CD4-positive, alpha-beta memory T cell (primary cell): ENCODE measurements at regions of chr6 and their contacts with region 1.

Region 1: GRCh38 chr6:149082286-149082707 is 235.2 kb upstream of the TAB2 start:
- DNase-seq: peak; percentile 76 to 86 (median 77)
- H3K4me3 ChIP-seq: no peak overlapping the region
- H3K4me3 Mint-ChIP-seq: peak overlapping the region in 4 of 8 donors; percentile 0 to 46 (median 25)
- H3K27ac ChIP-seq: no peak overlapping the region
- H3K27ac Mint-ChIP-seq: peak overlapping the region in 4 of 7 donors; percentile 12 to 85 (median 68)
- H3K4me1 ChIP-seq: peaks cover 40% of the 10 kb centered on the region
- H3K4me1 Mint-ChIP-seq: peaks cover 31 to 50% (median 38%) of the 10 kb centered on the region in 4 donors
- H3K27me3 ChIP-seq: no peaks in the 10 kb centered on the region
- H3K27me3 Mint-ChIP-seq: no peaks in the 10 kb centered on the region

Region 2: GRCh38 chr6:149028767-149029405 is 53.4 kb before region 1 on chr6:
- CTCF ChIA-PET with region 1: interaction called, 22 read pairs
- POLR2A ChIA-PET with region 1: interaction called, 23 read pairs
- intact Hi-C with region 1: loop called (anchors 1 kb)
- DNase-seq: peak; percentile 77 to 80 (median 78)
- H3K4me3 ChIP-seq: no peak overlapping the region
- H3K4me3 Mint-ChIP-seq: peak overlapping the region in 2 of 8 donors; percentile 66 to 69
- H3K27ac ChIP-seq: no peak overlapping the region
- H3K27ac Mint-ChIP-seq: peak overlapping the region in 6 of 7 donors; percentile 10 to 93 (median 78)
- H3K4me1 ChIP-seq: peaks cover 49% of the 10 kb centered on the region
- H3K4me1 Mint-ChIP-seq: peaks cover 33 to 46% (median 42%) of the 10 kb centered on the region in 4 donors
- H3K27me3 ChIP-seq: no peaks in the 10 kb centered on the region
- H3K27me3 Mint-ChIP-seq: no peaks in the 10 kb centered on the region

Region 3: GRCh38 chr6:149043476-149044130 is 38.7 kb before region 1 on chr6:
- CTCF ChIA-PET with region 1: interaction called, 10 read pairs
- POLR2A ChIA-PET with region 1: interaction called, 5 read pairs
- intact Hi-C with region 1: no loop called
- DNase-seq: no peak
- H3K4me3 ChIP-seq: no peak overlapping the region
- H3K4me3 Mint-ChIP-seq: peak overlapping the region in 1 of 8 donors; percentile 22
- H3K27ac ChIP-seq: no peak overlapping the region
- H3K27ac Mint-ChIP-seq: peak overlapping the region in 1 of 7 donors; percentile 64
- H3K4me1 ChIP-seq: peaks cover 40% of the 10 kb centered on the region
- H3K4me1 Mint-ChIP-seq: peaks cover 34 to 47% (median 41%) of the 10 kb centered on the region in 4 donors
- H3K27me3 ChIP-seq: no peaks in the 10 kb centered on the region
- H3K27me3 Mint-ChIP-seq: no peaks in the 10 kb centered on the region

Region 4: GRCh38 chr6:149094156-149094555 is 11.9 kb after region 1 on chr6:
- CTCF ChIA-PET with region 1: interaction called, 9 read pairs
- POLR2A ChIA-PET with region 1: interaction called, 27 read pairs
- intact Hi-C with region 1: no loop called
- DNase-seq: peak in 1 of 5 donors; percentile 12
- H3K4me3 ChIP-seq: peak overlapping the region in 1 of 2 donors; percentile 13
- H3K4me3 Mint-ChIP-seq: peak overlapping the region; percentile 57 to 76 (median 68)
- H3K27ac ChIP-seq: peak overlapping the region; percentile 27
- H3K27ac Mint-ChIP-seq: peak overlapping the region; percentile 74 to 96 (median 92)
- H3K4me1 ChIP-seq: peaks cover 65% of the 10 kb centered on the region
- H3K4me1 Mint-ChIP-seq: peaks cover 36 to 63% (median 52%) of the 10 kb centered on the region in 4 donors
- H3K27me3 ChIP-seq: no peaks in the 10 kb centered on the region
- H3K27me3 Mint-ChIP-seq: no peaks in the 10 kb centered on the region

Region 5: DNA sequence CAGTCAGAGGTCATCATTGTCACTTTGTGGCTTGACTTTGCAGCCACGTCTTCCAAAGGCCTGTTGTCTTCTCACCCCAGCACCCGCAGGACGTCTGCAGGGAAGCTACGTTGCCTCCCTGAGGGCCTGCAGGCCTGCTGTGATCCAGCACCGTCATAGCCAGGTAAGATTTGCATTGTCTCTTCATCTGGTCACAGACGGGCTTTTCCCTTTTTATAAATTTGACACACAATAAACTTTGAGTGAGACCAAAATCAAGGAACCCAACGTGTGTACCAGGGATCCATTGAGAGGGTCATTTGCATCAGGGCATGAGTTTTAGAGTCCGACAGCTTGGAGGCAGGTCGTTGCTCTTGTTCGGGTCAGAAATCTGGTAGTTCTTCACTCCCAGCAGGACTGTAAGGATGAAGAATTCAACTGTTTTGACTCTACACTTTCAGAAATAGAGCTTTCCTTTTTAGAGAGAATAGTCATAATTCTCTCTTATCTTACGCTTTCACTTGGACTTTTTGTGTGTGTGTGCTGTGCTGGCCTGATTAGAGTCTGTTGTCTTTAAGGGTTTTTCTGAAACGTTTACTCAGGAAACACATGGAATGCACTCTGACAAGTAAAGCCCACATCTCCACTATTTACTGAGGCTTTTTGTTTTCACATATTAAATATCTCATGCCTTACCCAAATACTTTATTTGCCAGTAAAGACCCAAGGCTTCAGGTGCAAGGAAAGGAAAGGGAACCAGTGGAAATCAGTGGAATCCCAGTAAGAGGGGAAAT is 58.0 kb after region 1 on chr6:
- CTCF ChIA-PET with region 1: interaction called, 4 read pairs
- POLR2A ChIA-PET with region 1: interaction called, 3 read pairs
- intact Hi-C with region 1: loop called (anchors 2 kb)
- DNase-seq: peak; percentile 51 to 91 (median 64)
- H3K4me3 ChIP-seq: peak overlapping the region; percentile 6 to 47
- H3K4me3 Mint-ChIP-seq: peak overlapping the region; percentile 67 to 90 (median 76)
- H3K27ac ChIP-seq: peak overlapping the region; percentile 95
- H3K27ac Mint-ChIP-seq: peak overlapping the region; percentile 94 to 100 (median 99)
- H3K4me1 ChIP-seq: peaks cover 66% of the 10 kb centered on the region
- H3K4me1 Mint-ChIP-seq: peaks cover 31 to 61% (median 46%) of the 10 kb centered on the region in 4 donors
- H3K27me3 ChIP-seq: no peaks in the 10 kb centered on the region
- H3K27me3 Mint-ChIP-seq: no peaks in the 10 kb centered on the region

Region 6: DNA sequence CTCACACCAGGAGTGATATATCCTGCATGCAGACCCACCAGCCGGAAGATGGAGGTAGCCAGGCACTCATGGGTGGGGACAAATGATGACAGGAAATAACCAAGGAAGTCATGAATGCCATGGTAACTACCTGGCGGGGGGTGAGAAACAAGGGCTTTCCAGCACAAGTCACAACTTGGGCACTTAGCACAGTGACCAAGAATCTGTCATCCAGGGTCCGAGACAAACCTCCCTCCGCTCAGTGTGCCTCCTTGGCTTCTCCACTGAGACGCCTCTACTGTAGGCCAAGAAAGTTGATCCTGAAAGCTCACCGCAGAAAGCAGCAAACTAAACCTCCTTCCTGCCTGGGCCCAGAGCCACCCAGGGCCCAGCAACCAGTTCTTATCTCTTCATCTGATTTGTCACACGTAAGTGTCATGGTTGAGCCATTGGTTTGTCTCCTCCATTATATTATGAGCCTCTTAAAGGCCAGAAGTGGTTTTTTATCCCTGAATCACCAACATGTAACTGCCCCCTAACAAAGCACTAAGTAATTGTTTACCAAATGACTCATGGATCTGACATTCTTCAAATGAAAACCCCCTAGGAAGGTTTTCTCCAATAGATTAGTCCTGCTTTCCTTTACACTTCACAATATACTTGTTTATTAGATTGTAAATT is 150.9 kb after region 1 on chr6:
- CTCF ChIA-PET with region 1: no interaction called
- POLR2A ChIA-PET with region 1: no interaction called
- intact Hi-C with region 1: loop called (anchors 1 kb)
- DNase-seq: peak; percentile 57 to 78 (median 74)
- H3K4me3 ChIP-seq: peak overlapping the region; percentile 2 to 18
- H3K4me3 Mint-ChIP-seq: peak overlapping the region; percentile 24 to 94 (median 82)
- H3K27ac ChIP-seq: peak overlapping the region; percentile 83
- H3K27ac Mint-ChIP-seq: peak overlapping the region; percentile 94 to 100 (median 98)
- H3K4me1 ChIP-seq: peaks cover 43% of the 10 kb centered on the region
- H3K4me1 Mint-ChIP-seq: peaks cover 44 to 68% (median 55%) of the 10 kb centered on the region in 4 donors
- H3K27me3 ChIP-seq: no peaks in the 10 kb centered on the region
- H3K27me3 Mint-ChIP-seq: no peaks in the 10 kb centered on the region

Region 7: GRCh38 chr6:149264629-149265028 is 182.3 kb after region 1 on chr6:
- CTCF ChIA-PET with region 1: no interaction called
- POLR2A ChIA-PET with region 1: interaction called, 3 read pairs
- intact Hi-C with region 1: loop called (anchors 1 kb)
- DNase-seq: peak; percentile 48 to 64 (median 55)
- H3K4me3 ChIP-seq: peak overlapping the region in 1 of 2 donors; percentile 8
- H3K4me3 Mint-ChIP-seq: peak overlapping the region in 6 of 8 donors; percentile 2 to 74 (median 58)
- H3K27ac ChIP-seq: no peak overlapping the region
- H3K27ac Mint-ChIP-seq: peak overlapping the region in 6 of 7 donors; percentile 20 to 86 (median 58)
- H3K4me1 ChIP-seq: peaks cover 42% of the 10 kb centered on the region
- H3K4me1 Mint-ChIP-seq: peaks cover 21 to 51% (median 35%) of the 10 kb centered on the region in 4 donors
- H3K27me3 ChIP-seq: no peaks in the 10 kb centered on the region
- H3K27me3 Mint-ChIP-seq: no peaks in the 10 kb centered on the region

Region 8: GRCh38 chr6:149380523-149380922 is 298.2 kb after region 1 on chr6:
- CTCF ChIA-PET with region 1: no interaction called
- POLR2A ChIA-PET with region 1: no interaction called
- intact Hi-C with region 1: no loop called
- DNase-seq: no peak
- H3K4me3 ChIP-seq: no peak overlapping the region
- H3K4me3 Mint-ChIP-seq: no peak overlapping the region
- H3K27ac ChIP-seq: no peak overlapping the region
- H3K27ac Mint-ChIP-seq: peak overlapping the region in 1 of 7 donors; percentile 6
- H3K4me1 ChIP-seq: peaks cover 25% of the 10 kb centered on the region
- H3K4me1 Mint-ChIP-seq: peaks cover 26 to 67% (median 44%) of the 10 kb centered on the region in 4 donors
- H3K27me3 ChIP-seq: no peaks in the 10 kb centered on the region
- H3K27me3 Mint-ChIP-seq: no peaks in the 10 kb centered on the region